Activated CD4-positive, alpha-beta memory T cell treated with anti-CD3 and anti-CD28 coated beads, Interleukin-2, amount 10 ng/mL, durations not matched to agents 7 days and 5 days (primary cell): ENCODE measurements at regions of chr9 and their contacts with region 1.

Region 1: DNA sequence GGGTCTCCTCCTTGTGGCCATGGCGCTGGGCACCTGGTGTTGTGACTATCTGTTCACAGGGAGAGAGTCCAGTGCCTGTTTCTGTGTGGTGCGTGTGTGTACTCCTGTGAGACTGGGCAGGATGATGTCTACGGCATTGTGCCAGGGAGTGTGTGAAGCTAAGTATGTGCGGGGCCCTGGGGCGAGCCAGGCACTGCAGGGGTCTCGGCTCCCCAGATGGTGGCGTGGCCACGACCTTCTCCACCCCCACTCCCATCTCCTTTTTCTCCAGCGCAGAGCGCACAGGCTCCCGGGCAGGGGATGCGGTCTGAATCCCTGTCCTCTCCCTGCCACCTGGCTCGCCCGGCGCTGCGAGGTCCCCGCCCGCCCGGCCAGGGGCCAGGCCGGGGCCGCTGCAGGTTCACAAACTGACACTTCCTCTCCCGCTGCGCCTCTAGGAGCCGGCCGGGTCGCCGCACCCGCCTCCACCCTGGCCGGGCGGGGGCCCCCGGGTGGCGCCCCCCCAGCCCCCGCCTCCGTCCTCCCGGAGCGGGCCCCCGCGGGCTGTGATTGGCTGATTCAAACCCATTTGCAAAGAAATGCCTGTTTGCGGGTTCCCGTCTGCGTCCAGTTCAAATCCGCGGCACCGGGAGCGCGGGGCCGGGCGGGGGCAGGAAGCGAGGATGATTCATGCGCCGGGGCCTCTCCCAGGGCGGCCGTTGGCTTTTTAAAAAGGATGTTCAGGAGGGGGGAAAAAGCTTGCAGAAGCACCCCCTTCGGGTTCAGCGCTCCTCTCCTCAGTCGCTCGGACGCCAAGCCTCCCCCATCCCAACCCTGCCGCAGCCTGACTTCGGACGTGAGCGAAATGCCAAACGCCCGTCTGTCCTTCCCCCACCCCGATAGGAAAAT is 790 bp downstream of the PHF19 start:
- DNase-seq: peak; percentile 94
- H3K4me3 Mint-ChIP-seq: peak overlapping the region; percentile 94
- H3K27ac Mint-ChIP-seq: peak overlapping the region; percentile 98
- H3K4me1 Mint-ChIP-seq: peaks cover 76% of the 10 kb centered on the region
- H3K27me3 Mint-ChIP-seq: no peaks in the 10 kb centered on the region

Region 2: DNA sequence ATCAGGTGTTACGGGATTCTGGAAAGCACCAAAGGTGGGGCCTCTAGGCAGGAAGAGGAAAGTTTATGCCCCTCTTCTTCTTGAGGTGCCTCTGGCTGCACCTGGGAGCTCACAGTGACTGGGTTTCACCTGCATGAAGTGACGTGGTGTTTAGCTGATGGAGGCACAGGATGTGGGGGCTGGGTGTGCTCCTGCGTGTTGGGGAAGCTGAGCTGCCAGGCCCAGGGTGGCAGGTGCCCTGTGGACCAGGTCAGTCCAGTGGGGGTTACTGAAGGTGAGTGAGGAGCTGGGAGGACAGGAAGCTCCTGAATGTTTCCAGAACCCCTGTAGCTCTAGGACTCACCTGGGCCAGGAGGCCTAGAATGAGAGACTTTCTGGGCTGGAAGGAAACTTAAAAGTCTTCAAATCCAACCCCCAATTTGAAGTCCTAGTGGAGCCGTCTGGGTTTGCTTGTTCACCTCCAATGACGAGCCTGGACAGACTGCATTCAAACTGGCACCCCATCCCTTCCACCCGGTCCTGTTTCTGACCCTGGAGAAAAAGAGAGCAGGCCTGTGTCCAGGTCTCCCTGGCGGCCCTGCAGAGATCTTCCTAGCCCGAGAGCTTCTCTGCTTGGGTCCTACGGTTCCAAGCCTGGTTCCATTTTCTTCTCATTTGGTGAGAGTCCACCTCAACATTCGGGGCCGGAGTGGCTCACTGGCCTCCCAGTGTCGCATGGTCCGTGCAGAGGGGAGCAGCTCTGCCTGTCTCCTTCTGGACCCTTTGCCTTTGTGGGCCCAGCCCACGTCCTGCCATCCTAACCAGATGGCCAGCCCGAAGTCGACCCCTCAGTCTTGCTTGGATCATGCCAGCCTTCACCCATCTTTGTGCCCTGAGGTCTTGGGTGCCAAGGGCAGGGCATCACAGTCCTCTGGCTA is 28.1 kb after region 1 on chr9:
- CTCF ChIA-PET with region 1: interaction called, 4 read pairs
- POLR2A ChIA-PET with region 1: interaction called, 10 read pairs
- DNase-seq: peak; percentile 59
- H3K4me3 Mint-ChIP-seq: no peak overlapping the region
- H3K27ac Mint-ChIP-seq: peak overlapping the region; percentile 86
- H3K4me1 Mint-ChIP-seq: peaks cover 84% of the 10 kb centered on the region
- H3K27me3 Mint-ChIP-seq: no peaks in the 10 kb centered on the region

Region 3: DNA sequence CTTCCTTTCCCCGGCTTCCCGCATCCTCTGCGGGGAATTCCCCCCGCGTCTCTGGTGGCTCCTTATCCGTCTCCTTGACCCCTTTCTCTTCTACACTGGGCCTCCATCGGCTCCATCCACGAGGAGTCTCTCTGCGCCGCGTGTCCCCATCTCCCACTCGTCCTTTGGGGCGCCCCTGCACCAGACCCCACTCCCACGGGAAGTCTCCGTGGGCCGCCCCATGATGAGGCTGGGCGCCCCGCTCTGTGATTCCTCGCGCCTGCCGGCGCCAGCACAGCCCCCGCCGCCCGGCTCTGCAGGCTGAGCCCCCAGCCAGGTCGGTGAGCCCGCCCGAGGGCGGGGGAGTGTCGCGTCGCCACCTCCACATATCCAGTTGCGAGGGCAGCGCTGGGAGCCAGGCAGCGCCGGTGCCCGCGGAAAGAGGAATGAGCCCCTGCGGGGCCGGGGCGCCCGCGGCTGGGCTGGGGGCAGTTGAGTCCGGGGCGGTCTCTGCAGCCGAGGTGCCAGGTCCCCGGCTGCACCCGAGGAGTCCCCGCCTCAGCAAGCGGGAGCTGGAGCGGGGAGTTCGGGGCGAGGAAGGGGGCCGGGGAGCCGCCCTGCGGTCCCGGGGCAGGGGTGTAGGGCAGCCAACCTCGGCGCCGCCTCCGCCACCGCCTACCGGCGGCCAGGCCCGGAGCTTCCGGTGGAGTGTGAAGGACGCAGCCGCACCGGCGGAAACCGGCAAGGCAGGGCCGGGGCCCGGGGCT is 52.5 kb after region 1 on chr9:
- CTCF ChIA-PET with region 1: interaction called, 11 read pairs
- POLR2A ChIA-PET with region 1: interaction called, 864 read pairs
- DNase-seq: peak; percentile 86
- H3K4me3 Mint-ChIP-seq: peak overlapping the region; percentile 93
- H3K27ac Mint-ChIP-seq: peak overlapping the region; percentile 100
- H3K4me1 Mint-ChIP-seq: peaks cover 79% of the 10 kb centered on the region
- H3K27me3 Mint-ChIP-seq: no peaks in the 10 kb centered on the region

Region 4: DNA sequence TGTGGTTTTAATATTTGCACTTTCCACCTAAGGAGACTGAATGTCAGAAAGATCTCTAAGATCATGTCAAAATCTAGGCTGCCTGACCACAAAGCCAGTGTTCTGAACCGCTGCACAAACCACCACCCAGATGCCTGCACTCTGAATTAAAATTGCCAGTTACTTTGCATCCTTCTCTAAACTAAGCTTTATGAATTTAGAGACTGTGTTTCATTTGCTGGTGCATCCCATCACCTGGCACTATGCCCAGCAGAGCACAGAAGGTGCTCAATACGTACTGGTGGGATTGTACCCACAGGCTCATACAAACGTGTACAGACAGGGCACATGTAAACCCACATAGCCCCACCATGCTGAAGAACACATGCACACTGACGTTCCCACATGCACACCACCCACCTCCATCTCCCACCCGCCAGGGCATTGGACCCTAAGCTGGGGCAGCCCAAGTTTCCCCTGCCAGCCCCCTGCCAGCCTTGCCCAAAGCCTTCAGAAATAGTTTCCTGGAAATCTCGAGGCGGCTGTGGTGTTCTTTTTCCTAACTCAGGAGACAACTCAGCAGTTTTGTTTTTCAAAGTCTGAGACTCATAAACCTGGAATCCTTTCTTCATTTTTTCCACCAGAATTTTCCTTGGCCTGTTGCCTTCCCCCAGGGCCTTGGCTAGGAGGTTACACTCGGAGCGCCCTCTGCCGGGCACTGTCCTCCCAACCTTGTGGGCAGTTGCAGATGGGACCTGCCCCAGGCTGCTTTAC is 60.0 kb after region 1 on chr9:
- CTCF ChIA-PET with region 1: interaction called, 26 read pairs
- POLR2A ChIA-PET with region 1: interaction called, 864 read pairs
- DNase-seq: peak; percentile 89
- H3K4me3 Mint-ChIP-seq: peak overlapping the region; percentile 51
- H3K27ac Mint-ChIP-seq: peak overlapping the region; percentile 76
- H3K4me1 Mint-ChIP-seq: peaks cover 59% of the 10 kb centered on the region
- H3K27me3 Mint-ChIP-seq: peaks cover 7% of the 10 kb centered on the region